Naive thymus-derived CD4-positive, alpha-beta T cell (primary cell): ENCODE measurements at regions of chr2 and their contacts with region 1.

Region 1: GRCh38 chr2:58063641-58064040 is 17.0 kb downstream of the VRK2 start:
- DNase-seq: no peak
- ATAC-seq: no peak
- H3K4me3 ChIP-seq: no peak overlapping the region
- H3K4me3 Mint-ChIP-seq: peak overlapping the region in 8 of 10 donors; percentile 18 to 69 (median 56)
- H3K27ac ChIP-seq: no peak overlapping the region
- H3K27ac Mint-ChIP-seq: peak overlapping the region in 5 of 9 donors; percentile 10 to 74 (median 20)
- H3K4me1 ChIP-seq: peaks cover 0 to 10% of the 10 kb centered on the region in 2 donors
- H3K4me1 Mint-ChIP-seq: peaks cover 24 to 55% (median 36%) of the 10 kb centered on the region in 7 donors
- H3K27me3 ChIP-seq: no peaks in the 10 kb centered on the region
- H3K27me3 Mint-ChIP-seq: no peaks in the 10 kb centered on the region

Region 2: DNA sequence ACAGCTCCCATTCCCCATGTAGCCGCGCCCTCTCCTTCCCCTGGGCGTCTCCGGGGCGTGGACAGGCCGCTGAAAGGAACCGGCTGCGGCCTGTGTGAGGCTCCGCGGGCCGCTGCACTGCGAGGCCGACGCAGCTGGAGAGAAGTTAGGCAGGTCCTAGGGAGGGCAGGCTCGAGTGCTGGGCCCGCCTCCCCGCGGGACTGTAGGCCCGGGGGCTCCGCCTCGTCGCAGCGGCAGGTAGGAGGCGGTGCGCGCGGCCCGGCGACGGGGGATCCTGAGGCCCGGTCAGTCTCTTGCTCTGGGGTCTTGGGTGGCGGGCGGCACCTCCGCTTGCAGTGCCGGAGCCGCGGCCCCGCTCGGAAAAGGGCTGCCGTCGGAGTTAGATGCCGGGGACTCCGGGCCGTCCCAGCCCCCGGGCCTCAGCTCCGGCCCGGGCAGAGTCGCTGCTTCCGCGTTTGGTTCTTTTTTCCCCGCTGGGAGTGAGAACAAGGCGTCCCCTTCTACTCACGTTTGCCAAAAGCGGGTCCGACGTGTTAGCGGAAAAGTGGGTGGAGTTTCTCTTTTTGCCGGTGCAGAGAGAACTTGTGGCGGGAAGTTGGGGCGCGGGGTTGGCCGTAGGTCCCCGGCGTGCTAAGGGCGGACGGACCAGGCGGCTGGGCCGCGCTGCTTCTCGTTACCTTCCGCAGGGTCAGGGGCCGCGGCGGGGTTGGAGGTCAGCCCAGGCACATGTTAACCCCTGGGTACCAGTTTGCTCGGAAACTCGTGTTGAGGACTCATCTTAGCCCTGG is 16.9 kb before region 1 on chr2 and contains the start of gene VRK2:
- CTCF ChIA-PET with region 1: no interaction called
- POLR2A ChIA-PET with region 1: interaction called, 5 read pairs
- intact Hi-C with region 1: loop called (anchors 1 kb)
- DNase-seq: peak; percentile 72 to 86 (median 85)
- ATAC-seq: peak; percentile 94
- H3K4me3 ChIP-seq: peak within 1 kb of the TSS; percentile 67
- H3K4me3 Mint-ChIP-seq: peak within 1 kb of the TSS; percentile 87 to 94 (median 92)
- H3K27ac ChIP-seq: peak within 1 kb of the TSS; percentile 84
- H3K27ac Mint-ChIP-seq: peak within 1 kb of the TSS; percentile 91 to 97 (median 94)
- H3K4me1 ChIP-seq: peaks cover 18 to 20% of the 10 kb centered on the region in 2 donors
- H3K4me1 Mint-ChIP-seq: peaks cover 27 to 55% (median 51%) of the 10 kb centered on the region in 7 donors
- H3K27me3 ChIP-seq: no peaks in the 10 kb centered on the region
- H3K27me3 Mint-ChIP-seq: no peaks in the 10 kb centered on the region
- total RNA-seq, gene VRK2: 13.1 to 24.5 (median 14.1) TPM

Region 3: DNA sequence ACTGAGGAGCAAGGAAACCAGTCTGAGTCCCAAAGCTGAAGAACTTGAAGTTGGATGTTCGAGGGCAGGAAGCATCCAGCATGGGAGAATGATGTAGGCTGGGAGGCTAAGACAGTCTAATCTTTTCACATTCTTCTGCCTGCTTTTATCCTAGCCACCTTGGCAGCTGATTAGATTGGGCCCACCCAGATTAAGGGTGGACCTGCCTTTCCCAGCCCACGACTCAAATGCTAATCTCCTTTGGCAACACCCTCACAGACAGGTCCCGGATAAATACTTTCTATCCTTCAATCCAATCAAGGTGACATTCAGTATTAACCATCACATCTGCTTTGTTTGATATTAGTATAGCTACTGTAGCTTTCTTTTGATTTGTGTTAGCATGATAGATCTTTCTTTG is 10.1 kb after region 1 on chr2:
- CTCF ChIA-PET with region 1: no interaction called
- POLR2A ChIA-PET with region 1: no interaction called
- intact Hi-C with region 1: loop called in 1 of 2 experiments (anchors 2 kb)
- DNase-seq: no peak
- ATAC-seq: no peak
- H3K4me3 ChIP-seq: no peak overlapping the region
- H3K4me3 Mint-ChIP-seq: no peak overlapping the region
- H3K27ac ChIP-seq: no peak overlapping the region
- H3K27ac Mint-ChIP-seq: no peak overlapping the region
- H3K4me1 ChIP-seq: no peaks in the 10 kb centered on the region
- H3K4me1 Mint-ChIP-seq: peaks cover 0 to 36% (median 30%) of the 10 kb centered on the region in 7 donors
- H3K27me3 ChIP-seq: no peaks in the 10 kb centered on the region
- H3K27me3 Mint-ChIP-seq: no peaks in the 10 kb centered on the region

Region 4: GRCh38 chr2:58131191-58132011 is 67.8 kb after region 1 on chr2:
- CTCF ChIA-PET with region 1: no interaction called
- POLR2A ChIA-PET with region 1: no interaction called
- intact Hi-C with region 1: no loop called
- DNase-seq: no peak
- ATAC-seq: no peak
- H3K4me3 ChIP-seq: no peak overlapping the region
- H3K4me3 Mint-ChIP-seq: no peak overlapping the region
- H3K27ac ChIP-seq: no peak overlapping the region
- H3K27ac Mint-ChIP-seq: peak overlapping the region in 1 of 9 donors; percentile 74
- H3K4me1 ChIP-seq: no peaks in the 10 kb centered on the region
- H3K4me1 Mint-ChIP-seq: no peaks in the 10 kb centered on the region
- H3K27me3 ChIP-seq: no peaks in the 10 kb centered on the region
- H3K27me3 Mint-ChIP-seq: no peaks in the 10 kb centered on the region

Region 5: GRCh38 chr2:58163913-58164312 is 100.3 kb after region 1 on chr2:
- CTCF ChIA-PET with region 1: no interaction called
- POLR2A ChIA-PET with region 1: no interaction called
- intact Hi-C with region 1: no loop called
- DNase-seq: no peak
- ATAC-seq: no peak
- H3K4me3 ChIP-seq: no peak overlapping the region
- H3K4me3 Mint-ChIP-seq: no peak overlapping the region
- H3K27ac ChIP-seq: no peak overlapping the region
- H3K27ac Mint-ChIP-seq: no peak overlapping the region
- H3K4me1 ChIP-seq: no peaks in the 10 kb centered on the region
- H3K4me1 Mint-ChIP-seq: no peaks in the 10 kb centered on the region
- H3K27me3 ChIP-seq: no peaks in the 10 kb centered on the region
- H3K27me3 Mint-ChIP-seq: no peaks in the 10 kb centered on the region